Calu3 (cell line): ENCODE measurements at regions of chr7 and their contacts with region 1.

Region 1: DNA sequence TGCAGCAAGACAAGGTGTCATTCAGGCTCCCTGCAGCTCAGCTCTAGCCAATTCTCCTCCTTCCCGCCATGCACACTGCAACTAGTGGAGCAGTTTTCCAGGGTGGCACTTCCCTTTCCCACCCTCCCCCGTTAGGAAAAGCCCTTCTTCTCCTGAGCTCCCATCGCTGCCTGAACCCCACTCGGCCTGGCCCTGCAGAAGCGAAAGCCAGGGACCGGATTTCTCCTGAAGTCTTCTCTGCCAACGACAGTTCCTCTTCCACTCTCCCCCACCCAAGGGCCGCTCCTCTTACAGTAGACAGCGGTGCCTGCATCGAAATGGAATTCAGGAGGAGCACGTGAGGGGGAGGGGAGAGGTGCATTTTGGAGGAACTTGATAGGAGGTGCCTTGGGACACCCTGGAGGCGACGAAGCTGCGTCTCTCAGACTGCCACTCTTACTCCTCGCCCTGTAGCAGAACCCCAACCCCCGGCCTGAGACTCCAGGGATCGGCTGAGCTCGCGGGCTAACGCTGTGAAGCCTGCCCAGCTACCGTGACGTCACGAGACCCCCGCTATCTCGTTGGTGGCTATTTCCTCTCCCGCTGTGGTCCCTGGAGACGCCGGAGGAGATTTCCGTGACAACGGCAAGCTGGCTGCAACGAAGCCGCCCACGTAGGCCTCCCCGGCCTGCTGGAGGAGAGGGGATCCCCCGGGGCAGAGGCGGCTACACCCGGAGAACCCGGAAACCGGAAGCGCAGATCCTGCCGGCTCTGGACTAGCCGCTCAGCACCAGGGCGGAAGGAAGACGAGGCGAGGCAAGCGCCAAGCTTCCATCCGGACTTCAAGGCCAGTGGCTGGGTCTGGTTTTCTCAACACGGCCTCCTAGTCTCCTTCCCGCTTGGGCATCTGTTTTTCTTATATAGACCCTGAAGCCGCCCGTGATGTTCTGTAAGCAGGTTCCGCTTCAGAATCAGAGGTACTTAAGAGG is 109.7 kb downstream of the RALA start:
- DNase-seq: peak; percentile 98
- H3K4me3 Mint-ChIP-seq: peak overlapping the region; percentile 94
- H3K27ac Mint-ChIP-seq: peak overlapping the region; percentile 98
- H3K4me1 Mint-ChIP-seq: peaks cover 35% of the 10 kb centered on the region
- H3K27me3 Mint-ChIP-seq: no peaks in the 10 kb centered on the region
- CTCF ChIP-seq: no peak

Region 2: GRCh38 chr7:39446546-39446945 is 286.6 kb before region 1 on chr7:
- CTCF ChIA-PET with region 1: no interaction called
- intact Hi-C with region 1: no loop called
- DNase-seq: no peak
- H3K4me3 Mint-ChIP-seq: no peak overlapping the region
- H3K27ac Mint-ChIP-seq: no peak overlapping the region
- H3K4me1 Mint-ChIP-seq: no peaks in the 10 kb centered on the region
- H3K27me3 Mint-ChIP-seq: peaks cover 39% of the 10 kb centered on the region
- CTCF ChIP-seq: no peak

Region 3: DNA sequence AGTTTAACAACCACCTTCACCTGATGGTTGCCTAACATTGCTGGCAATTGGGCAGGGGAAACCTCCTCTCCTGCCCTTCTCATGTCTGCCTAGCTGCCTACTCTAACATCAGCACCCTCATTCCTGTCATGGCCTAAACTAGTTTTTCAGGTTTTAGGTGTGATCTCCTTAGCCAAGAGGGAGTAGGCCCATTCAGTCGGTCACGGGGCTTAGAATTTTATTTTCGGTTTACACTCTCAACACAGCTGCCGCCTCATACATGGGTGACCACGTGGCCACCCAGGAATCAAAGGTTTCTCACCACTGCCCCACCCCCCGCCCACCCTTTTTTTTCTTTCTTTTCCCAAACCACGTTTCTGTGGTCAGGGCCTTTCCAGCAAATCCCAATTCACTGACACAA is 12.5 kb before region 1 on chr7:
- CTCF ChIA-PET with region 1: no interaction called
- intact Hi-C with region 1: loop called (anchors 2 kb)
- DNase-seq: peak; percentile 85
- H3K4me3 Mint-ChIP-seq: peak overlapping the region; percentile 1
- H3K27ac Mint-ChIP-seq: peak overlapping the region; percentile 53
- H3K4me1 Mint-ChIP-seq: peaks cover 28% of the 10 kb centered on the region
- H3K27me3 Mint-ChIP-seq: no peaks in the 10 kb centered on the region
- CTCF ChIP-seq: no peak

Region 4: GRCh38 chr7:39746103-39746819 is 13.1 kb after region 1 on chr7:
- CTCF ChIA-PET with region 1: interaction called, 14 read pairs
- intact Hi-C with region 1: no loop called
- DNase-seq: peak; percentile 89
- H3K4me3 Mint-ChIP-seq: no peak overlapping the region
- H3K27ac Mint-ChIP-seq: no peak overlapping the region
- H3K4me1 Mint-ChIP-seq: peaks cover 30% of the 10 kb centered on the region
- H3K27me3 Mint-ChIP-seq: no peaks in the 10 kb centered on the region
- CTCF ChIP-seq: peak; percentile 79